ENCODE measurements at regions of chr3 and their contacts with region 1.

Region 1: GRCh38 chr3:114418724-114419543 is 125.1 kb downstream of the TIGIT start:
- DNase-seq: no peak
- H3K4me3 Mint-ChIP-seq: no peak overlapping the region
- H3K27ac Mint-ChIP-seq: no peak overlapping the region
- H3K4me1 Mint-ChIP-seq: peaks cover 14% of the 10 kb centered on the region
- H3K27me3 Mint-ChIP-seq: peaks cover 2% of the 10 kb centered on the region

Region 2: GRCh38 chr3:114152519-114153151 is 266.3 kb before region 1 on chr3:
- CTCF ChIA-PET with region 1: interaction called, 64 read pairs
- POLR2A ChIA-PET with region 1: no interaction called
- DNase-seq: peak; percentile 83
- H3K4me3 Mint-ChIP-seq: peak overlapping the region; percentile 55
- H3K27ac Mint-ChIP-seq: no peak overlapping the region
- H3K4me1 Mint-ChIP-seq: peaks cover 11% of the 10 kb centered on the region
- H3K27me3 Mint-ChIP-seq: peaks cover 2% of the 10 kb centered on the region

Region 3: GRCh38 chr3:114383875-114384557 is 34.9 kb before region 1 on chr3:
- CTCF ChIA-PET with region 1: interaction called, 92 read pairs
- POLR2A ChIA-PET with region 1: interaction called, 6 read pairs
- DNase-seq: peak; percentile 73
- H3K4me3 Mint-ChIP-seq: peak overlapping the region; percentile 61
- H3K27ac Mint-ChIP-seq: peak overlapping the region; percentile 57
- H3K4me1 Mint-ChIP-seq: peaks cover 9% of the 10 kb centered on the region
- H3K27me3 Mint-ChIP-seq: no peaks in the 10 kb centered on the region

Region 4: DNA sequence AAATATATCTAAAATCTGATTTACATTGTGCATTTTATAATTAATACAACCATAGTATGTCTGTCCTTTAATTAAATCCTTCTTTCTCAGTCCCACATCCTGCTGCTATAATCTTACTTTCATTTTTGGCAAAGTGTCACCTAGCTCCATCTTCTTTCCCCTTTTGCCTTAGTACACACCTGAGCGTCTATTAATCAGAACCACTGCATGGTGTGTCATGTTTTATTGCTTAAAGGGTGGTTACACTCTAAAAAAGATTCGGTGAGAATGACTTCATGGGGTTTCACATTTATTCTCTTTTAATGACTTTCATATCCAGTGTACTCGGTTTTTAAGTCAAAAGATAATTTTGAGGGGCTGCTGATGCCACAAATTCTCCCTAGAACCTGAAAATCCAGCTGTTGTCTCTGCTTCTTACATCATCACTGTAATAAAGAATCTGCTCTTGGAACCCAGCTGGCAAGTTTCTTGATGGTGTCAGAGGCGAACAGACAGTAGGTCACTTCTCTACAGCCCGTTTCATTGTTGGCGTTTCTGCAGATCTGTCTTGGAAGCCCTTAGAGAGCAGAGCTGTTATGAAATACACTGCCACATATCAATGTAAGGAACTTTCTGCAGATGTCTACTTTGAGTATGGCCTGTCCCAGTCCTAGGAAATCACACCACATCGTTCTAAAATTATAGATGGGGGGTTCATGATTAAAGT is 25.4 kb before region 1 on chr3:
- CTCF ChIA-PET with region 1: interaction called, 15 read pairs
- POLR2A ChIA-PET with region 1: interaction called, 3 read pairs
- DNase-seq: no peak
- H3K4me3 Mint-ChIP-seq: no peak overlapping the region
- H3K27ac Mint-ChIP-seq: no peak overlapping the region
- H3K4me1 Mint-ChIP-seq: peaks cover 20% of the 10 kb centered on the region
- H3K27me3 Mint-ChIP-seq: no peaks in the 10 kb centered on the region